Mammary epithelial cell (primary cell): ENCODE measurements at regions of chr17 and their contacts with region 1.

Region 1: GRCh38 chr17:2847381-2848333 is 51.4 kb downstream of the RAP1GAP2 start:
- DNase-seq: no peak
- H3K4me3 ChIP-seq: no peak overlapping the region
- H3K27ac ChIP-seq: no peak overlapping the region
- H3K4me1 ChIP-seq: peaks cover 4% of the 10 kb centered on the region
- H3K27me3 ChIP-seq: no peaks in the 10 kb centered on the region
- CTCF ChIP-seq: no peak

Region 2: GRCh38 chr17:2380226-2380922 is 467.3 kb before region 1 on chr17:
- CTCF ChIA-PET with region 1: no interaction called
- dilution Hi-C with region 1: no loop called
- in situ Hi-C with region 1: no loop called
- intact Hi-C with region 1: no loop called
- DNase-seq: no peak
- H3K4me3 ChIP-seq: no peak overlapping the region
- H3K27ac ChIP-seq: no peak overlapping the region
- H3K4me1 ChIP-seq: peaks cover 14% of the 10 kb centered on the region
- H3K27me3 ChIP-seq: no peaks in the 10 kb centered on the region
- CTCF ChIP-seq: no peak

Region 3: DNA sequence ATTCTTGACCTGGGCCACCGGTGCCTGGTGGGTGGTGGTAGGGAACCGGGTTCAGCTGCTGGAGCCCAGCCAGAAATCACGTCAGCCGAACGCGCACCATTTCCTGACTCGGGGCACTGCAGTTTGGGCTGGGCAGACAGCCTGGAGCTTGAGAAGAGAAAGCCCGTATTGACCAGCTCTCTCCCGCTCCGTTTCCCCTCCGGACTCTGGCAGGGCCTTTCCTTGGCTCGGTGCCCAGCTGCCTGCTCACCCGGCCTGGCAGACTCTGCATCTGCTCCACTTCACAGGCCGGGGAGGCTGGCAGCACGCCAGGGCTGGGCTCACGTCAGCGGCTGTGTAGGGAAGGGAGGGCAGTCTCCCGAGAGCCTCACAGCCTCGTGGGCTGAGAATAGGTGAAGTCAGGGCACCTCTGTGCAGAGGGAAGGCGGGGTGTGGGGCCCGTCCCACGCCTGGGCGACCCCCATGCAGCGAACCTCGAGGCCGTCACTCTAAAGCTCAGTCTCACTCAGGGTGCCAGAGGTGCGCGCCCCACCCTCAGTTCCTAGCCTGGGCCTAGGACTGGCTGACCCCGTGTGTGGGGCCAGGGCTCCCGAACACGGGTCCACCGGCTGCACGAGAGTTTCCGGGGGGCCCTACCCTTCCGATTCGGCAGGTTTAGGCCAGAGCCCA is 156.6 kb after region 1 on chr17:
- CTCF ChIA-PET with region 1: no interaction called
- dilution Hi-C with region 1: no loop called
- in situ Hi-C with region 1: loop called in 1 of 2 experiments (anchors 25 kb)
- intact Hi-C with region 1: loop called (anchors 2 kb)
- DNase-seq: peak; percentile 93
- H3K4me3 ChIP-seq: no peak overlapping the region
- H3K27ac ChIP-seq: peak overlapping the region; percentile 28
- H3K4me1 ChIP-seq: peaks cover 16% of the 10 kb centered on the region
- H3K27me3 ChIP-seq: no peaks in the 10 kb centered on the region
- CTCF ChIP-seq: no peak

Region 4: DNA sequence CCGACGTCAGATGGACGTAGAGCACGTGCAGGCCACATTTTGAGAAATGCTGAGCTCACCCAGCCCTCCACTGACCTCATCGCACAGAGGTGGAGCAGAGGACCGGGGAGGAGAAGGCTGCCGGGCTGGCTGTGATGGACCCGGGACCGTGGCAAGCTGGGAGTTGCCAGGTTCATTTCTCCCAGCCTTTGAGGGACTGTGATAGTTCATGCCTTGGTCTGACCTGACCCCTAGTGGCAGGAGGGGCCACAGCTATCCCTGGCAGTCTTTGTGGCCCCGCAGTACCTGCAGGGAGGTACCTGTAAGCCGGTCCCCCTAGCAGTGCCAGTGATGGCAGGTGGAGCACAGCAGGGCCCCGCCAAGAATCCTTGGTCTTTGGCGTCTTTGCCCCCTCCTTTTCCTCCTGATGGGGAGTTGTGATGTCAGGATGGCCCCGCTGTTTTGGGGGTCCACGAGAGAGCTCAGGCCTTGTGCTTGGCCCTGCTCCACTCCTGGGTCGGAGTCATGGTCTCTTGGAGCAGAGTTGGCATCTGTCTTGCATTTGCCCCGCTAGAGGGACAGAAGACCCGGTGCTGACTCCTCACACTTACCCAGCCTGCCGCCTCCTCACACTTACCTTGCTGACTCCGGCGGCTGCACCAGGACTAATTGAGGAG is 165.4 kb after region 1 on chr17:
- CTCF ChIA-PET with region 1: interaction called, 4 read pairs
- dilution Hi-C with region 1: loop called (anchors 5 kb)
- in situ Hi-C with region 1: loop called (anchors 10 to 25 kb)
- intact Hi-C with region 1: loop called (anchors 1 kb)
- DNase-seq: peak; percentile 26
- H3K4me3 ChIP-seq: no peak overlapping the region
- H3K27ac ChIP-seq: no peak overlapping the region
- H3K4me1 ChIP-seq: no peaks in the 10 kb centered on the region
- H3K27me3 ChIP-seq: no peaks in the 10 kb centered on the region
- CTCF ChIP-seq: peak; percentile 63 to 64

Region 5: DNA sequence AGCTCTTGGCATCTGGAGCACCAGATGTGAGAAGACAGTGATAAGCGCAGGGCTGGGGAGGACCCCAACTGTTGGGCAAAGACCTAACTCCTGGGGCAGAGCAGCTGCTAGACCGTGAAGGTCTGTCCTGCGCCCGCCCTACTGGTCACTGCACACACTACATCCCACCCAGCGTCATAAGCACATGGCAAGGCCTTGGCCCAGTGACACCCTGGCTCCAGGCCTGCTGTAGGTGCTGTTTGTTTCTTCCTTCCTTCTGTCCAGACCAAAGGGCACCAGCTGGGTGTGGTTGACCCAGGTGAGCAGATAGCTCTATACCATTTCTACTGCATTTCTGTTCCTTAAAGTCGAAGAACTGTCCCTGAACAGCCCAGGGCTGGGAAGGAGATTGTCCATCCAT is 703.5 kb after region 1 on chr17:
- CTCF ChIA-PET with region 1: no interaction called
- dilution Hi-C with region 1: no loop called
- in situ Hi-C with region 1: no loop called
- intact Hi-C with region 1: loop called (anchors 5 kb)
- DNase-seq: no peak
- H3K4me3 ChIP-seq: no peak overlapping the region
- H3K27ac ChIP-seq: no peak overlapping the region
- H3K4me1 ChIP-seq: no peaks in the 10 kb centered on the region
- H3K27me3 ChIP-seq: no peaks in the 10 kb centered on the region
- CTCF ChIP-seq: no peak